ENCODE measurements at regions of chr21 and their contacts with region 1.

Region 1: DNA sequence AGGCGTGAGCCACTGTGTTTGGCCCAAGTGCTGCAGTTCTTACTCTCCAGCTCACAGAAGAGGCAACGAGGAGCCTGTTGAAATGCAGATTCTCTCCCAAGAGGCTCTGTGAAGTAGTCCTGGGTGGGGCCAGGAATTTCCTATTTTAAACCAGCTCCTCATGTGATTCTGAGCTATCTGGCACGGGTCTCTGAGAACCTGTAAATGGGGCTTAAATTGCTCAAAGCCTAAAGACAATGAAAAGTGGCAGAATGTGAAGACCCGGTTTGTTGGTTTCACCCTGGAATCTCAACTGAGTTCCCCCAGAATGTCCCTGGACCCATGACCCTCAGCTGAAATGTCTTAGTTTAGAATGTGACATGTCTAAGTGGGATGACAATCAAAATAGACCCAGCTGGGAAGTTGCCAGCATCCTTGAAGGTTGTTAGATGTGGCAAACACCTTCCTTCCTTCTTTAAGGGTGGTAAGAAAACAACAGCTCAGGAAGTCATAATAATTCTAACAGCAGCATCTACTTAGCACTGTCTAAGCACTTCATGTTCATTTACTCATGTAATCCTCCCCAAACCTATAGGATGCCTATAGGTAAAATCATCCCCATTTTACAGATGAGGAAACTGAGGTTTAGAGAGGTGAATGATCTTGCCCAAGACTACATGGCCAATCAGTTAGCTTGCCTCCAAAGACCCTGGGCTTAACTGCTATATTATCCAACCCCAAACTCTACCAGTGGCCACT is 20.9 kb upstream of the ATP5PO start:
- DNase-seq: peak in 2 of 3 donors; percentile 18 to 37
- H3K4me3 ChIP-seq: no peak overlapping the region
- H3K4me3 Mint-ChIP-seq: no peak overlapping the region
- H3K27ac ChIP-seq: peak overlapping the region in 1 of 2 donors; percentile 45
- H3K27ac Mint-ChIP-seq: peak overlapping the region in 3 of 7 donors; percentile 20 to 86 (median 76)
- H3K4me1 ChIP-seq: peaks cover 34 to 46% of the 10 kb centered on the region in 2 donors
- H3K4me1 Mint-ChIP-seq: peaks cover 60% of the 10 kb centered on the region
- H3K27me3 ChIP-seq: no peaks in the 10 kb centered on the region
- H3K27me3 Mint-ChIP-seq: peaks cover 0 to 2% (median 0%) of the 10 kb centered on the region in 3 donors
- CTCF ChIP-seq: no peak

Region 2: DNA sequence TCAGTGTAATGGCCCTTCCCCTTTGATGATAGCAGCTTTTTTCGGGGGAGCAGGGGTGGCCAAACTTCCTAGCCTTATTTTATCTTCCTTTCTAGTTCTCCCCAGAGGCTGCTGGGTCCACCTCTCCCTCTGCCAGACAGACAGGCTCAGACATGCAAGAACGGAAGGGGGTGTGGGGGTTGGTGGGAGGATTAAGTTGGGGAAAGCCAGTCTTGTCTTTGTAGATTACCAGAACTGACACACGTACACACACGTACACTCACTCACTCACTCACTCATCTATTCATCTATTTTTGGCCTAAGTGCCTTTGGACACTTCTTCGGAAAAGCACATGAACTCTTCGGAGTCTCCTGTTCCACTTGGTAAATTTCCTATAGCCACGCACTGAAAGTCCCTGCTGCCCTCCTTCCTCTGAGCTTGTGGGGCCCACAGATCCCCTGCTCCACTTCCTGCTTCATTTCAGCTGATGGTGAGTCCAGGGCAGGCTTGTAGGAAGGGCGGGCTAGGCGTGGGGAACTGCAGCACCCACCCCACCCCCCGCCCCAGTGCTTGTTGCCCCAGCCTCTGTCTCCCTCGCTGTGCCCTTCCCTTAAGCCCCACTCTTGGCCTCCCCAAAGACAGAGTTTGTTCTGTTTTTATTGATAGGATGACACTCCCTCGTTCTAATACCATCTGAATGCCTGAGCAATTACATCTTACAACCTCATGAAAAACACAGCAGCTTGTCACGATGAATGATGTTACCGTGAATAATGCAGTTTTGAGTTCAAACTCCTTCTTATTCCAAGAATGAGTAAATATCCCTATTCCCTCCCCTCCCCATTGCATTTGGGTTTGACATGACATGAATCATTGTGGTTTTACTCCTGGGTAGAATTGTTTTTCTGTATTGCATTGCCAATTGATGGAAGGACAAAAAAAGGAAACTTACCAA is 39.9 kb after region 1 on chr21:
- intact Hi-C with region 1: loop called (anchors 5 kb)
- DNase-seq: peak; percentile 67 to 83 (median 72)
- H3K4me3 ChIP-seq: peak overlapping the region in 1 of 3 experiments; percentile 52
- H3K4me3 Mint-ChIP-seq: peak overlapping the region; percentile 49 to 79
- H3K27ac ChIP-seq: peak overlapping the region; percentile 71 to 92
- H3K27ac Mint-ChIP-seq: peak overlapping the region; percentile 87 to 98 (median 92)
- H3K4me1 ChIP-seq: peaks cover 46 to 62% of the 10 kb centered on the region in 2 donors
- H3K4me1 Mint-ChIP-seq: peaks cover 52% of the 10 kb centered on the region
- H3K27me3 ChIP-seq: no peaks in the 10 kb centered on the region
- H3K27me3 Mint-ChIP-seq: peaks cover 0 to 2% (median under 1%) of the 10 kb centered on the region in 3 donors
- CTCF ChIP-seq: no peak

Region 3: GRCh38 chr21:34078915-34079314 is 142.4 kb after region 1 on chr21:
- intact Hi-C with region 1: loop called in 1 of 2 experiments (anchors 5 kb)
- DNase-seq: no peak
- H3K4me3 ChIP-seq: no peak overlapping the region
- H3K4me3 Mint-ChIP-seq: no peak overlapping the region
- H3K27ac ChIP-seq: no peak overlapping the region
- H3K27ac Mint-ChIP-seq: peak overlapping the region in 1 of 7 donors; percentile 23
- H3K4me1 ChIP-seq: peaks cover 21 to 27% of the 10 kb centered on the region in 2 donors
- H3K4me1 Mint-ChIP-seq: peaks cover 54% of the 10 kb centered on the region
- H3K27me3 ChIP-seq: no peaks in the 10 kb centered on the region
- H3K27me3 Mint-ChIP-seq: no peaks in the 10 kb centered on the region
- CTCF ChIP-seq: no peak

Measured in CD14-positive monocyte (primary cell).